Heart left ventricle (tissue), 16 donors: ENCODE measurements at regions of chr9 and their contacts with region 1.

Region 1: DNA sequence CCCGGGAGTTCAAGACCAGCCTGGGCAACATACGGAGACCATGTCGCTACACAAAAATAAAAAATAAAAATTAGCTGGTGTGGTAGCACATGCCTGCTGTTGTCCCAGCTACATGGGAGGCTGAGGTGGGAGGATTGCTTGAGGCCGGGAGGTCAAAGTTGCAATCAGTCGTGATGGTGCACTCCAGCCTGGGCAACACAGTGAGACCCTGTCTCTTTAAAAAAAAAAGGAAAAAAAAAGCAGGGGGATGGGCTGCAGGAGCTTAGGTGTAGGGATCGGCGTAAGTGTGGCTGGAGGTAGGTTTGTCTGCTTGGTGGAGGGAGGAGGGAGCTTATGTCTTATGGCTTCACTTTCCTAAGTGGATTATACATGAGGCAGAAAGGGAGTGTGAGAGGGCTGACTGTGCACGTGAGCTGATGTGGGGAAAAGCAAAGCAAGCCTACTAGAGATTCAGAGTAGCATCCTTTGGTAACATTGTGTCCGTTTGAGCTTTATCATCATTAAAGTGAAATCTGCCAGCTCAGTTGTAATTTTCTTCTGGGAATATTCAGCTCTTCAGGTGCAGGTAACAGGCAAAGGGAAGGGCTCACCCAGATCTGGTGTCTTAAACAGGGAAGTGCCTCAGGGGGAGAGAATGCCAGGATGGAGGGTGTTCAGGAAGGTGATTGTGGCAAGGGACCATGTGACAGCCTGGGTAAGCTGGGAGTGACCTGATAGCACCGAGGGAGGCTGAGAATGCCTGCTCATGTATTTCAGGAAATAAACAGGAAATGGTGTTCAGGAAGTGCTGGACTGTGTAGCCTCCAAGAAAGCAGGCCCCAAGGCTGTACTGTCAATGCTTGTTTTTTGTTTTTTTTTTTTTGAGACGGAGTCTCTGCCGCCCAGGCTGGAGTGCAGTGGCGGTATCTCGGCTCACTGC is 17.6 kb upstream of the SETX start:
- DNase-seq: peak in 4 of 5 donors; percentile 66 to 73 (median 68)
- ATAC-seq: peak; percentile 72 to 99 (median 90)
- H3K4me3 ChIP-seq: peak overlapping the region in 2 of 12 donors; percentile 6 to 9
- H3K27ac ChIP-seq: peak overlapping the region; percentile 51 to 85 (median 66)
- H3K4me1 ChIP-seq: peaks cover 0 to 17% (median 9%) of the 10 kb centered on the region in 12 donors
- H3K27me3 ChIP-seq: no peaks in the 10 kb centered on the region
- CTCF ChIP-seq: no peak
- POLR2A ChIP-seq: peak in 1 of 2 donors; percentile 11

Region 2: GRCh38 chr9:132006677-132007370 is 365.6 kb before region 1 on chr9:
- intact Hi-C with region 1: no loop called
- DNase-seq: no peak
- ATAC-seq: peak in 2 of 4 donors; percentile 20 to 22
- H3K4me3 ChIP-seq: no peak overlapping the region
- H3K27ac ChIP-seq: no peak overlapping the region
- H3K4me1 ChIP-seq: peaks cover 0 to 21% (median 12%) of the 10 kb centered on the region in 12 donors
- H3K27me3 ChIP-seq: no peaks in the 10 kb centered on the region
- CTCF ChIP-seq: no peak
- POLR2A ChIP-seq: no peak

Region 3: GRCh38 chr9:132354637-132355355 is 17.6 kb before region 1 on chr9 and contains the start of gene SETX:
- intact Hi-C with region 1: loop called in 1 of 10 experiments (anchors 2 kb)
- DNase-seq: peak; percentile 98 to 99 (median 98)
- ATAC-seq: peak; percentile 97 to 99 (median 98)
- H3K4me3 ChIP-seq: peak within 1 kb of the TSS; percentile 67 to 100 (median 92)
- H3K27ac ChIP-seq: peak within 1 kb of the TSS; percentile 67 to 99 (median 94)
- H3K4me1 ChIP-seq: peaks cover 3 to 44% (median 36%) of the 10 kb centered on the region in 12 donors
- H3K27me3 ChIP-seq: no peaks in the 10 kb centered on the region
- CTCF ChIP-seq: peak in 3 of 12 donors; percentile 5 to 26 (median 24)
- POLR2A ChIP-seq: peak; percentile 82 to 96
- total RNA-seq, gene SETX: 19.3 to 42.5 (median 27.8) TPM

Region 4: DNA sequence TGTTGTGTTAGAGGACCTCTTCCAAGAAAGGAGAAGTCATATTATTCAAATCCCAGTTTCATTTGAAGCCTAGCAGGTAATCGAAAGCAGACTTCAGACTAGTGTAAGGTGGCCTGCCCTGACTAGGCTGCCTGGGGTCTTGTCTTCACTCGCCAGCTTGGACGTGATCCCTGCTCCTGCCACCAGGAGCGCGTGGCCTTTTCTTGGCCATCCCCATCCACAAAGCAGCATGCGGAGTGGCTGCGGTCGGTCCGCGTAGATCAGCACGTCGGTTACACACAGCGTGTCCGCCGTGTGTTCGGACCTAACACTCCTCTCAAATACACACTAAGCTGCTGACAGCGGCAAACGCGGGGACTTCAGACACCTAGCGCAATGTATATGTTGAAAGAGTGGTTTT is 74.9 kb after region 1 on chr9:
- intact Hi-C with region 1: no loop called
- DNase-seq: no peak
- ATAC-seq: no peak
- H3K4me3 ChIP-seq: no peak overlapping the region
- H3K27ac ChIP-seq: no peak overlapping the region
- H3K4me1 ChIP-seq: no peaks in the 10 kb centered on the region
- H3K27me3 ChIP-seq: peaks cover 0 to 11% (median 0%) of the 10 kb centered on the region in 9 donors
- CTCF ChIP-seq: no peak
- POLR2A ChIP-seq: no peak

Region 5: DNA sequence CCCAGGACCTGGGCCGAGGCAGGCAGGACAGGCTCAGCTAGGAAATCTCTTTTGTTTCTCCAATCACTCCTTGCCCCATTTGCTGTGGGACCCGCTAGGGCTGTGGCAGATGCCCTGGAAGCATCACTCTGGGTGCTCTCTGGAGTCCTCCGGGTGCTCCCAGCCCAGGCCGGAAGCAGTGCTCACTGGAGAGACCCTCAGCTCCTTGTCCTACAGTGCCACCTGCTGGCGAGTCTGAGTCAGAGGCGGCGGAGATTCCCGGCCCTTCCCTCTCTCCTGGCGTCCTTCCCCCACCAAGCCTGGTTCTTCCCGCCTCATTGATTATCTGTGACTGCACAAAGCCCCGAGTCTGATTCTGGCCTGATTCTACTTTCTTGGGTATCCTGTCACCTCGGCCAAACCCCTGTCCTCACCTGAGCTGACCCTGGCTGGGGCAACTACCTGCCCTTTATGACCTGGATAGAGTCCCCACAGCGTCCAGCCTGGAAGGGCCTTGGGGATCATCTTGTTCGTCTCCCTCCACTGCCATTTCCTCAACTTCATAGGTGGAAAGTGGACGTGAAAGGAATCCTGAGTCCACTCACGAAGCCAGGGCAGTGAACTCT is 202.7 kb after region 1 on chr9:
- intact Hi-C with region 1: no loop called
- DNase-seq: peak; percentile 54 to 83 (median 66)
- ATAC-seq: peak; percentile 59 to 91 (median 85)
- H3K4me3 ChIP-seq: no peak overlapping the region
- H3K27ac ChIP-seq: no peak overlapping the region
- H3K4me1 ChIP-seq: peaks cover 0 to 5% (median 0%) of the 10 kb centered on the region in 12 donors
- H3K27me3 ChIP-seq: peaks cover 22 to 64% (median 34%) of the 10 kb centered on the region in 9 donors
- CTCF ChIP-seq: peak; percentile 53 to 82 (median 70)
- POLR2A ChIP-seq: no peak